ENCODE measurements at regions of chr12 and their contacts with region 1.

Region 1: DNA sequence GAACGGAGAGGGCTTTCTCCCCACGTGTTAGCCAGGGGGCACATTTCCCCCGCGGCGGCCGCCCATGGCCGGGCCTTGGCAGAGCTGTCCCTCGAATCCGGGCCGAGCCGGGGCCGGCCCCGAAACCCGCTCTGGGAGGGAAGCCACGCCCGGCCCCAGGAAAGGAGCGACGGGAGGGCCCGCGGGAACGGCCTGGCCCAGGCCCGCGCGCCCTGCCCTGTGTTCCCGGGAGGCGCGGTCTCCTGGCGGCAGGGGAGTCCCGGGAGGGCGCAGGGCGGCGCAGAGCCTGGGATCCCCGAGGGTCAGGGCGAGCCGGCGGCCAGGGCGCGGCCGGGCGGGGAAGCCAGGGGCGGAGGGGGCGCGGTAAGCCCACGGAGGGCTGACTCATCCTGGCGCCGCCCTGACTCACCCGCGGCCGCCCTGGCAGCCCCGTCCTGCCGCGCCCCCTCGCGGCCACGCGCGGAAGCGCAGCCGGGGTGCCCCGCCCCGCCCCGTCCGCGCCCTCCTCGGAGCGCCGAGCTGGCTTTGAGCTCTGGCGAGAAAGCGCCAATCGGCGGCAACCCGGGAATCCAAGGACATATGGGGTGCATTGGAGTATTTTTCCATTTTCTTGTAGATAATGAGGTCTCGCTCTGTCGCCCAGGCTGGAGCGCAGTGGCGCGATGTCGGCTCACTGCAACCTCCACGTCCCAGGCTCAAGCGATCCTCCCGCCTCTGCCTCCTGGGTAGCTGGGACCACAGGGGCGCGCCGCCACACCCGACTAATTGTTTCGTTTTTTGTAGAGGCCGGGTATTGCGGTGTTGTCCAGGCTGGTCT is 31.8 kb upstream of the PLEKHG6 start:
- DNase-seq: peak; percentile 83
- H3K27ac ChIP-seq: peak overlapping the region; percentile 87
- CTCF ChIP-seq: peak; percentile 80

Region 2: DNA sequence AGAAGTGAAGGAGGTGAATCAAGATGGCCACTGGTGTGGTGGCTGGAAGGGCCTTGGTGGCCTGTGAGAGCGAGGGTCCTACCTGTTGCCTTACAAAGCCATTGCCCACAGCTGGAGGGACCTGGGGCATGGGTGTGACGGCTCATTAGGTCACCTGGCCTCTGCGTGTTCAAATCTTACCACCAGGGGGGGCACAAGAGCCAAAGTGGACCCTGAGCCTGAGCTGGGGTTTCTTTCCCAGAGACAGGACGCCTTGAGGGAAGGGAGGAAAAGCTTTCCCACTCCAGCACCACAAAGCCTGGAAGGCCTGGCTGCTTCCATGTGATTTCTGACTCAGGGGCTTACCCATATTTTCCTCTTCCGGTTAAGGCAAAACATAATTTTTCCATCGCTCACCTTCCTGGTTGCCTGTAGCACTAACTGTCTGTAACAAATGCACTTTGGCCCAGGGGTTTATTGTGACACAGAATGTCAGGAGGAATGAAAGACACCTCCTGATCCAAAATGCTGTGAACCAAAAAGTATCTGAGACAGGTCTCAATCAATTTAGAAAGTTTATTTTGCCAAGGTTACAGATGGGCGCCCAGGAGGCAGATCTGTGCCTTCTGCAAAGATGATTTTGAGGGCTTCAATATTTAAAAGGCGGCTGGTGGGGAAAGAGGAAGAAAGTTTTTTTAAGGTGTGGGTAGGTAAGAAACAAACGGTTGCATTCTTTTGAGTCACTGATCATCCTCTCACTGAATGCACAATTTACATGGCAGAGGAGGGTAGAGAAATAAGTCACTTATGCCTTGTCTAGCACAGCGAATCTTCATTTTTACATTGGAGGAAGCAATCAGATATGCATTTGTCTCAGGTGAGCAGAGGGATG is 82.7 kb before region 1 on chr12:
- CTCF ChIA-PET with region 1: interaction called, 28 read pairs
- POLR2A ChIA-PET with region 1: interaction called, 11 read pairs
- DNase-seq: peak; percentile 93
- H3K27ac ChIP-seq: peak overlapping the region; percentile 67
- CTCF ChIP-seq: peak; percentile 73

Region 3: GRCh38 chr12:6230321-6231110 is 48.1 kb before region 1 on chr12:
- CTCF ChIA-PET with region 1: interaction called, 11 read pairs
- POLR2A ChIA-PET with region 1: interaction called, 3 read pairs
- DNase-seq: no peak
- H3K27ac ChIP-seq: peak overlapping the region; percentile 97
- CTCF ChIP-seq: no peak

Region 4: DNA sequence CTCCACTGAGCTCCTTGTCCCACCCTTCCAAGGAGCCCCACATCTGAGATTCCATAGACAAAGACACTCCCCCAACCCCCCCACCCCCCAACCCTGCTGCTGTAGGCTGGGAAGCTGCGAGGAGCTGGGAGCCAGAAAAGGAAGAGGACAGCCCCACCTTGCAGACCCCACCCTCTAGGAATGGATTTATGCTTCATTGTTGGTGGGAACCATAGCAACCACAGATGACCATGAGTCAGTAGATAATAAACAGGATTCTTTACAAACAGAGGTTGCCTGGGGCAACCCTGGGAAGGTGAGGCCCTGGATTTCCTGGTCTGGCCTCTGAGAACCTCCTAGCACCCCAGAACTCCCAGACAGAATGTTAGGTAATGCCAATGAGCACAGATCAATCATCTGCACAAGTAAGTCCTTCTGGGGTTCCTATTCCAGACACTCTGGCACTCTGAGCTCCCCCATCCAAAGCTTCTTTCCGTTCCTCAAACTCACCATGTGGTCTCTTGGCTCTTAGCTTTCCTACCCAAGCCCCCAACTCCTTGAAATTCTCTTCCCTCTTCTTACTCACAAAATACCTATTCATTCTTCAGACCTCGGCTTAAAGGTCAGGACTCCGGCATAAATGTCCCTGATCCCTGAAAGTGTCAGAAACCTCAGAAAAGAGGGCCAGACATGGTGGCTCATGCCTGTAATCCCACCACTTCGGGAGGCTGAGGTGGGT is 16.6 kb after region 1 on chr12:
- CTCF ChIA-PET with region 1: no interaction called
- POLR2A ChIA-PET with region 1: no interaction called
- DNase-seq: peak; percentile 89
- H3K27ac ChIP-seq: peak overlapping the region; percentile 87
- CTCF ChIP-seq: no peak